ENCODE measurements at regions of chr3 and their contacts with region 1.

Region 1: GRCh38 chr3:143433787-143434378 is 314.3 kb downstream of the CHST2 start:
- DNase-seq: peak in 1 of 2 experiments; percentile 58
- H3K4me3 ChIP-seq: no peak overlapping the region
- H3K27ac ChIP-seq: no peak overlapping the region
- H3K4me1 ChIP-seq: peaks cover 3 to 13% (median 10%) of the 10 kb centered on the region in 4 experiments; a peak in 4 of 7 replicates
- H3K27me3 ChIP-seq: no peaks in the 10 kb centered on the region
- CTCF ChIP-seq: peak in 2 of 3 experiments; percentile 53 to 76; a peak in 3 of 4 replicates
- EP300 ChIP-seq: no peak
- POLR2A ChIP-seq: no peak
- RAD21 ChIP-seq: peak; percentile 78 to 79

Region 2: GRCh38 chr3:143443851-143444331 is 10.0 kb after region 1 on chr3:
- CTCF ChIA-PET with region 1: interaction called, 66 read pairs
- POLR2A ChIA-PET with region 1: no interaction called
- DNase-seq: no peak
- H3K4me3 ChIP-seq: no peak overlapping the region
- H3K27ac ChIP-seq: no peak overlapping the region
- H3K4me1 ChIP-seq: no peaks in the 10 kb centered on the region
- H3K27me3 ChIP-seq: no peaks in the 10 kb centered on the region
- CTCF ChIP-seq: no peak
- EP300 ChIP-seq: no peak
- POLR2A ChIP-seq: no peak
- RAD21 ChIP-seq: no peak

Region 3: GRCh38 chr3:143628971-143629370 is 195.1 kb after region 1 on chr3:
- CTCF ChIA-PET with region 1: interaction called, 10 read pairs
- POLR2A ChIA-PET with region 1: no interaction called
- DNase-seq: no peak
- H3K4me3 ChIP-seq: no peak overlapping the region
- H3K27ac ChIP-seq: no peak overlapping the region
- H3K4me1 ChIP-seq: no peaks in the 10 kb centered on the region
- H3K27me3 ChIP-seq: no peaks in the 10 kb centered on the region
- CTCF ChIP-seq: no peak
- EP300 ChIP-seq: no peak
- POLR2A ChIP-seq: no peak
- RAD21 ChIP-seq: no peak